ENCODE measurements at regions of chr3 and their contacts with region 1.

Region 1: DNA sequence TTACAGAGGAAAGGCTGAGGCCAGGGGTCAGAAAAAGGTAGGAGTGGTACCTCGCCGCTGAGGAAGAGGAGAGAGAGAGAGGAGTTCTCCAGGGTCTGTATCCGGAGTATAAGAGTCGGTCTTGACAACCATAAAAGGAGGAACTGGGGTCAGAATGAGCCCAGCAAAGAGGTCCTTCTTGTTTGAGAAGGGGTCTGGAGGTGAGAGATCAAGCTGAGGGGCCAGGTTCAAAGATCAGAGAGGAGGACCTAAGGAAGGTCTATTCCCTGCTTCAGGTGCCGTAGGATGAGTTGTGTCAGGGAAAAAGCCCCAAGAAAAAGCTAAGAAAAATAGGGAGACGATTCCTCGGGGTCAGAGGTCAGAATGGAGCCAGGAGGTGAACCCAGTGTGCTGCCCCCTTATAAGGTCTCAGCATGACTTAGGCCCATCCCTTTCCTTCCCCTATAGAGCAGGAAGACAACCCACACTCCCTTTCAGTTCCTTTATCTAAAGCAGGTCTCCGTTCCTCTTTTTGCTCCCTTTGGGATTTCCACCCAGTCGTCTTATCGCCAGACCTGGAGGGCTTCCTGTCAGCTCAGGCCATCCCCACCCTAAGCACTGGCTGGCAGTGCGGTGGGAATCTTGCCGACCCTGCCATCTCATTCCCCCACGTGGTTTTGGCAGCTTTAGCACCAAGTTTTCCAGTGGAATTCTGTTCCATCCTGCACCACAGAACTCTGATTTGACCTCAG is 651 bp downstream of the MTMR14 start:
- DNase-seq: peak in 1 of 5 donors; percentile 1
- H3K4me3 ChIP-seq: peak overlapping the region; percentile 98
- H3K4me3 Mint-ChIP-seq: peak overlapping the region; percentile 91 to 96 (median 92)
- H3K27ac ChIP-seq: peak overlapping the region; percentile 97
- H3K27ac Mint-ChIP-seq: peak overlapping the region; percentile 82 to 99 (median 94)
- H3K4me1 ChIP-seq: peaks cover 20% of the 10 kb centered on the region
- H3K4me1 Mint-ChIP-seq: peaks cover 31 to 49% (median 43%) of the 10 kb centered on the region in 3 donors
- H3K27me3 ChIP-seq: no peaks in the 10 kb centered on the region
- H3K27me3 Mint-ChIP-seq: peaks cover 0 to 6% of the 10 kb centered on the region in 2 donors

Region 2: GRCh38 chr3:9362731-9363530 is 287.0 kb before region 1 on chr3 and contains the start of gene THUMPD3:
- CTCF ChIA-PET with region 1: interaction called, 5 read pairs
- POLR2A ChIA-PET with region 1: interaction called, 11 read pairs
- DNase-seq: peak; percentile 84 to 93 (median 87)
- H3K4me3 ChIP-seq: peak within 1 kb of the TSS; percentile 98
- H3K4me3 Mint-ChIP-seq: peak within 1 kb of the TSS; percentile 90 to 100 (median 98)
- H3K27ac ChIP-seq: peak within 1 kb of the TSS; percentile 99
- H3K27ac Mint-ChIP-seq: peak within 1 kb of the TSS; percentile 95 to 100 (median 99)
- H3K4me1 ChIP-seq: peaks cover 21% of the 10 kb centered on the region
- H3K4me1 Mint-ChIP-seq: peaks cover 16 to 40% (median 19%) of the 10 kb centered on the region in 3 donors
- H3K27me3 ChIP-seq: no peaks in the 10 kb centered on the region
- H3K27me3 Mint-ChIP-seq: no peaks in the 10 kb centered on the region
- total RNA-seq, gene THUMPD3: 58.4 to 58.5 TPM

Region 3: GRCh38 chr3:9396700-9397521 is 253.0 kb before region 1 on chr3:
- CTCF ChIA-PET with region 1: no interaction called
- POLR2A ChIA-PET with region 1: interaction called, 12 read pairs
- DNase-seq: peak; percentile 98 to 100 (median 99)
- H3K4me3 ChIP-seq: peak overlapping the region; percentile 93
- H3K4me3 Mint-ChIP-seq: peak overlapping the region; percentile 91 to 99 (median 97)
- H3K27ac ChIP-seq: peak overlapping the region; percentile 90
- H3K27ac Mint-ChIP-seq: peak overlapping the region; percentile 93 to 99 (median 98)
- H3K4me1 ChIP-seq: peaks cover 69% of the 10 kb centered on the region
- H3K4me1 Mint-ChIP-seq: peaks cover 65 to 80% (median 77%) of the 10 kb centered on the region in 3 donors
- H3K27me3 ChIP-seq: no peaks in the 10 kb centered on the region
- H3K27me3 Mint-ChIP-seq: peaks cover 0 to 4% of the 10 kb centered on the region in 2 donors

Region 4: GRCh38 chr3:9452417-9452816 is 197.5 kb before region 1 on chr3:
- CTCF ChIA-PET with region 1: no interaction called
- POLR2A ChIA-PET with region 1: interaction called, 14 read pairs
- DNase-seq: peak in 1 of 5 donors; percentile 17
- H3K4me3 ChIP-seq: no peak overlapping the region
- H3K4me3 Mint-ChIP-seq: peak overlapping the region in 4 of 7 donors; percentile 32 to 54 (median 46)
- H3K27ac ChIP-seq: no peak overlapping the region
- H3K27ac Mint-ChIP-seq: peak overlapping the region; percentile 70 to 93 (median 88)
- H3K4me1 ChIP-seq: no peaks in the 10 kb centered on the region
- H3K4me1 Mint-ChIP-seq: peaks cover 21 to 44% (median 29%) of the 10 kb centered on the region in 3 donors
- H3K27me3 ChIP-seq: no peaks in the 10 kb centered on the region
- H3K27me3 Mint-ChIP-seq: no peaks in the 10 kb centered on the region

Region 5: GRCh38 chr3:9666704-9667445 is 16.9 kb after region 1 on chr3:
- CTCF ChIA-PET with region 1: no interaction called
- POLR2A ChIA-PET with region 1: no interaction called
- DNase-seq: no peak
- H3K4me3 ChIP-seq: no peak overlapping the region
- H3K4me3 Mint-ChIP-seq: no peak overlapping the region
- H3K27ac ChIP-seq: no peak overlapping the region
- H3K27ac Mint-ChIP-seq: peak overlapping the region in 2 of 8 donors; percentile 21 to 51
- H3K4me1 ChIP-seq: no peaks in the 10 kb centered on the region
- H3K4me1 Mint-ChIP-seq: peaks cover 4 to 8% (median 7%) of the 10 kb centered on the region in 3 donors
- H3K27me3 ChIP-seq: no peaks in the 10 kb centered on the region
- H3K27me3 Mint-ChIP-seq: peaks cover 0 to 7% of the 10 kb centered on the region in 2 donors

Region 6: GRCh38 chr3:9731206-9732079 is 81.5 kb after region 1 on chr3 and contains the start of gene BRPF1:
- CTCF ChIA-PET with region 1: interaction called, 10 read pairs
- POLR2A ChIA-PET with region 1: interaction called, 8 read pairs
- DNase-seq: peak; percentile 96 to 100 (median 99)
- H3K4me3 ChIP-seq: peak within 1 kb of the TSS; percentile 80
- H3K4me3 Mint-ChIP-seq: peak within 1 kb of the TSS; percentile 87 to 98 (median 95)
- H3K27ac ChIP-seq: peak within 1 kb of the TSS; percentile 85
- H3K27ac Mint-ChIP-seq: peak within 1 kb of the TSS; percentile 80 to 99 (median 97)
- H3K4me1 ChIP-seq: peaks cover 42% of the 10 kb centered on the region
- H3K4me1 Mint-ChIP-seq: peaks cover 51 to 71% (median 65%) of the 10 kb centered on the region in 3 donors
- H3K27me3 ChIP-seq: no peaks in the 10 kb centered on the region
- H3K27me3 Mint-ChIP-seq: no peaks in the 10 kb centered on the region
- total RNA-seq, gene BRPF1: 46.8 to 50.2 TPM